GM10248 (cell line): ENCODE measurements at regions of chr2 and their contacts with region 1.

Region 1: GRCh38 chr2:191818725-191819350 is 28.1 kb downstream of the CAVIN2 start:
- DNase-seq: no peak
- CTCF ChIP-seq: no peak

Region 2: DNA sequence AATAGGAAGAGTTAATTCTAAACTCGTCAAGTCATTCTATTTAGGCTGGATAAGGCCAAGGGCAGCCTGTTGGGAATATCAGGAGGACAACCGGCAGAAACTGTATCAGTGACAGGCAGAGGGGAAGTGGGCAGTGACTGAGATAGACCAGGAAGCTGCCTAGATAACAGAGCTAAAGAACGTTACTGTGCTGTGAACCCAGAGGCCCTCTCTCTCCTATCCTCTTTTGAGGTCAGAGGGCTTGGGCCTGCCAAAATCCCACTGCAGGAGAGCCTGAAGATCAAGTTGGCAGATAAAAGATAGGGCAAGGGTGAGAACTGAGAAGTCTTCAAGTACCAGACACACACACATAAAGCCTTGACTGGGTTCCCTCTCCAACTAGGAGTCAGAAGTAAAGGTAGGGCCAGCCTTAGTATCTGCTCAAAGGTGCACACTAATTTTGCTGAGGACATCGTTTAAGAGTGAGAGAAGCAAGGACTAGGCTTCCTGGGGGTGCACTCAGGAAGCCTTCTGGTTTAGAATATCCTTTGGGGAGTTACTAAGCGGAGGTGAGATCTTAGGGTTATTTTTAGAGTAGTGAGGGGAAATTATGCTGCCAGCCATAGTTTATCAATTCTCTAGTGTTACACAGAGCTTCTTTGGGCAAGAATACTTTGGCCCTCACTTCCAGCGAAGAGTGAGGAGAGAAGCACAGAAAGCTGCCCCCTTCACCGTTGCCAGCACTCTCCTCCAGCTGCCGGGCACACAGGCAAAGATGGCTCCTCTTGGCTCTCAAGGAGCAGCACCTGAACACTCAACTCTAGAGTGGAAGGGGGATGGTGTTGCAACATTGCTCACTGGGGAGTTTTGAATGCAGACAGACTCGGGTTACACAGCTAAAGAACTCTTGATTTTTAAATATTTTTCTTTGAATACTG is 18.3 kb after region 1 on chr2:
- CTCF ChIA-PET with region 1: interaction called, 11 read pairs
- POLR2A ChIA-PET with region 1: no interaction called
- DNase-seq: no peak
- CTCF ChIP-seq: no peak